ENCODE measurements at regions of chr12 and their contacts with region 1.

Region 1: DNA sequence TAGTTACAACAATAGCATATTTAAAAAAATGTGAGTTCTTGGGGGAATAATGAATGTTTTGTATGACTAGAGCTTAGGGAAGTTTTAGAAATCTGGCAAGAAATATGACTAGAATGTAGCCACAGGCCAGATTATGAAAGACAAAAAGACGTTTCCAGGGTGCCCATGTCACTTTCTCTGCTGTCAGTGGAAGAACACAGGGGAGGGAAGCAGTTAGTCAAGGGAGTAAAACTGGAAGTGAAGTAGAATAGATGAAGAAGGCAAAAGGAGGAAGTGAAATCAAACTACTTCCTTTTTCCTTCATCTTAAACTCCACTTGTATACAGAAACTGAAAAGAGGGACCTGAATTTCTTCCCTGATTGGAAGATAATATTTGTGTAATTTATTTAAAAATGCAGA is 81.2 kb upstream of the ATP2B1 start:
- DNase-seq: peak in 1 of 9 experiments; percentile 33
- ATAC-seq: no peak
- H3K4me3 ChIP-seq: no peak overlapping the region
- H3K4me3 Mint-ChIP-seq: no peak overlapping the region
- H3K27ac ChIP-seq: no peak overlapping the region
- H3K27ac Mint-ChIP-seq: no peak overlapping the region
- H3K4me1 ChIP-seq: no peaks in the 10 kb centered on the region
- H3K4me1 Mint-ChIP-seq: peaks cover 4% of the 10 kb centered on the region
- H3K27me3 ChIP-seq: no peaks in the 10 kb centered on the region
- H3K27me3 Mint-ChIP-seq: no peaks in the 10 kb centered on the region
- CTCF ChIP-seq: no peak

Region 2: GRCh38 chr12:89352492-89353187 is 437.2 kb before region 1 on chr12 and contains the start of gene DUSP6:
- CTCF ChIA-PET with region 1: no interaction called
- POLR2A ChIA-PET with region 1: no interaction called
- intact Hi-C with region 1: no loop called
- DNase-seq: peak; percentile 55 to 91 (median 76)
- ATAC-seq: peak; percentile 71
- H3K4me3 ChIP-seq: peak within 1 kb of the TSS; percentile 54 to 74
- H3K4me3 Mint-ChIP-seq: peak within 1 kb of the TSS; percentile 91
- H3K27ac ChIP-seq: peak within 1 kb of the TSS; percentile 45 to 55
- H3K27ac Mint-ChIP-seq: peak within 1 kb of the TSS; percentile 88
- H3K4me1 ChIP-seq: peaks cover 24% of the 10 kb centered on the region
- H3K4me1 Mint-ChIP-seq: peaks cover 43% of the 10 kb centered on the region
- H3K27me3 ChIP-seq: no peaks in the 10 kb centered on the region
- H3K27me3 Mint-ChIP-seq: peaks cover 3% of the 10 kb centered on the region
- CTCF ChIP-seq: no peak
- total RNA-seq, gene DUSP6: 3.0 to 3.9 TPM

Region 3: GRCh38 chr12:89833337-89834252 is 43.7 kb after region 1 on chr12:
- CTCF ChIA-PET with region 1: no interaction called
- POLR2A ChIA-PET with region 1: no interaction called
- intact Hi-C with region 1: loop called in 1 of 2 experiments (anchors 5 kb)
- DNase-seq: no peak
- ATAC-seq: no peak
- H3K4me3 ChIP-seq: no peak overlapping the region
- H3K4me3 Mint-ChIP-seq: no peak overlapping the region
- H3K27ac ChIP-seq: no peak overlapping the region
- H3K27ac Mint-ChIP-seq: no peak overlapping the region
- H3K4me1 ChIP-seq: no peaks in the 10 kb centered on the region
- H3K4me1 Mint-ChIP-seq: no peaks in the 10 kb centered on the region
- H3K27me3 ChIP-seq: no peaks in the 10 kb centered on the region
- H3K27me3 Mint-ChIP-seq: no peaks in the 10 kb centered on the region
- CTCF ChIP-seq: no peak

Measured in CD8-positive, alpha-beta T cell (primary cell).